Posterior vena cava (tissue), 2 donors: ENCODE measurements at regions of chr12 and their contacts with region 1.

Region 1: DNA sequence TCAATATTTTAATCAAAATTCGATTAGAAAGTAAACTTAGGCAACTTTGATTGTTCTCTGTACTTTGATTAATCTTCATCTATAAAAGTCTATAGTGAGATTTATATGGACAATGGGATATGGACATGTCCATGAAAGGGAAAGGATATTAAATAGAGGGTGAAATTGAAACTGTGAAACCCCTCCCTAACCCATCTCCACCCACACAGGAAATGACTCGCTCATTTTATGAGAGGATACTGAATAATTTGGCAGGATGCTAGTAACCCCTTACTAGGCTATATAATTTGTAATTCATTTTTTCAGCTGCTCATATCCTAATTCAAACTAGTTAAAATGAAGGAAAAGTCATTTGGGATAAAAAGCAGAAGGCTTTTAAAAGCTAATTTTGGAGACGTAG is 328.0 kb upstream of the ATP2B1 start:
- DNase-seq: no peak

Region 2: GRCh38 chr12:89882050-89882449 is 154.6 kb before region 1 on chr12:
- intact Hi-C with region 1: no loop called
- DNase-seq: no peak

Region 3: GRCh38 chr12:89949457-89950195 is 87.0 kb before region 1 on chr12:
- intact Hi-C with region 1: no loop called
- DNase-seq: no peak

Region 4: DNA sequence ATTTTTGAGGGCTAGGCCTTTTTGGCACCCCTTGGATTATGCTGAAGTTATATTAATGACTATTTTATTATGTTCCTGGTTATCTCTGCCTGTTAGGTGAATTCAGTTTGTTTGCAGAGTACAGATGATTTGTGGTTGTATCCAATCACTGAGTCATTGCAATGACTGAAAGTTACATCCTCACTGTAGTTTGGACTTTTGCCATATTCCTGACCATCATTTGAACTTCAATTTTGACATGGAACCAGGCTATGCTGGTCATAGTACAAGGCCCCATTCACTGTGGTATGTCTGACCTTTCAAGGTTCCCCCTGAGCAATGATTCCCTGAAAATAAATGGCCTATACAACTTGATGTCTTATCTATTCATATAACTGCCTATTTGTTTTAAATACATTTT is 297.3 kb after region 1 on chr12:
- intact Hi-C with region 1: no loop called
- DNase-seq: no peak

Region 5: DNA sequence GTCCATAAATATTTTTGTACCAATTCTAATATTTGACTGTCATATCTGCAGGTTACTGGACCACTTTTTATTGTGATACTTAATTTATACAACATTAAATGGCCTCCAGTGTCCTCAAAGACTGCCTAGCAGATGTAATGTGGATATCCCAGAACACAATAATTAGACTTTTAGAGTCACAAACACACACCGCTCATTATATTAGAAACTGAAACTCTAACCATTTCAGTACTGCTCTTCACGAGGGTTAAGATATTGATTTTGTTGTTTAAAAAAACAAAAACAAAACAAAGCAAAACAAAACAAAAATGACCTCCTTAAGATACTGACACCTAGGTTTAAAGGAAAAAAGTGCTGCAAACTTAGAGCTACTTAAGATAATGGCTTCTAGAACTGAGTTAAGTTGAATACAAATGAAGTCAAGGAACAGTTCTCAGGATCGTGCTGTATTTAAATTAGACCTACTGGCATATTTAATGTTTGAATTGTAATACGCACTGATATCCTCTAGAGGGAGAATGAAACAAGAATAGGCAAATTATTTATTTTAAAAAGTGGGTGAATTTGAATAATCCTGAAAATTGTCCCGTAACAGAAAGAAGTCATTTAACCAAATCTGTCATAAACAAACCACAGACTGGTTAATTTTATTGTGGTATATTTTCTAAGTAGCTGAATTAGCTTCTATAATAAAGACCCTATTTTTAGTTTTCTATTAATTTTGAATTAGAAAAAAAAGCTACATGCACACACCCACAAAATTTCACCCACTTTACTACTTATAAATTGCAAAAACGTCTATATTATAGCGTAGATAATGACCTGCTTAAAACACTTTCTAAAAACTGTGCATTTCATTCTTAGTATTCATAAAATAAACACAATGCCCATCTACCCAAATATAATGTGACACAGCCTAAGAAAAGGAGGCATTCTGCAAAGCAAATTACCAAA is 1541.2 kb after region 1 on chr12:
- intact Hi-C with region 1: loop called in 1 of 2 experiments (anchors 5 kb)
- DNase-seq: no peak